ENCODE measurements at regions of chr11 and their contacts with region 1.

Region 1: GRCh38 chr11:35579557-35580396 is 38.5 kb upstream of the FJX1 start:
- DNase-seq: peak; percentile 99
- ATAC-seq: peak; percentile 78
- H3K4me3 ChIP-seq: no peak overlapping the region
- H3K27ac ChIP-seq: peak overlapping the region; percentile 46
- H3K4me1 ChIP-seq: peaks cover 25% of the 10 kb centered on the region
- H3K27me3 ChIP-seq: no peaks in the 10 kb centered on the region
- CTCF ChIP-seq: no peak
- POLR2A ChIP-seq: no peak
- RAD21 ChIP-seq: no peak

Region 2: GRCh38 chr11:35511666-35512065 is 68.1 kb before region 1 on chr11:
- CTCF ChIA-PET with region 1: no interaction called
- POLR2A ChIA-PET with region 1: no interaction called
- dilution Hi-C with region 1: no loop called
- in situ Hi-C with region 1: no loop called
- intact Hi-C with region 1: loop called (anchors 5 kb)
- DNase-seq: peak; percentile 91
- ATAC-seq: peak; percentile 86
- H3K4me3 ChIP-seq: no peak overlapping the region
- H3K27ac ChIP-seq: peak overlapping the region; percentile 39
- H3K4me1 ChIP-seq: peaks cover 14% of the 10 kb centered on the region
- H3K27me3 ChIP-seq: no peaks in the 10 kb centered on the region
- CTCF ChIP-seq: no peak
- POLR2A ChIP-seq: no peak
- RAD21 ChIP-seq: peak; percentile 25; the same call in 1 of the 2 replicates

Measured in IMR-90 (cell line).